ENCODE measurements at regions of chr1 and their contacts with region 1.

Region 1: DNA sequence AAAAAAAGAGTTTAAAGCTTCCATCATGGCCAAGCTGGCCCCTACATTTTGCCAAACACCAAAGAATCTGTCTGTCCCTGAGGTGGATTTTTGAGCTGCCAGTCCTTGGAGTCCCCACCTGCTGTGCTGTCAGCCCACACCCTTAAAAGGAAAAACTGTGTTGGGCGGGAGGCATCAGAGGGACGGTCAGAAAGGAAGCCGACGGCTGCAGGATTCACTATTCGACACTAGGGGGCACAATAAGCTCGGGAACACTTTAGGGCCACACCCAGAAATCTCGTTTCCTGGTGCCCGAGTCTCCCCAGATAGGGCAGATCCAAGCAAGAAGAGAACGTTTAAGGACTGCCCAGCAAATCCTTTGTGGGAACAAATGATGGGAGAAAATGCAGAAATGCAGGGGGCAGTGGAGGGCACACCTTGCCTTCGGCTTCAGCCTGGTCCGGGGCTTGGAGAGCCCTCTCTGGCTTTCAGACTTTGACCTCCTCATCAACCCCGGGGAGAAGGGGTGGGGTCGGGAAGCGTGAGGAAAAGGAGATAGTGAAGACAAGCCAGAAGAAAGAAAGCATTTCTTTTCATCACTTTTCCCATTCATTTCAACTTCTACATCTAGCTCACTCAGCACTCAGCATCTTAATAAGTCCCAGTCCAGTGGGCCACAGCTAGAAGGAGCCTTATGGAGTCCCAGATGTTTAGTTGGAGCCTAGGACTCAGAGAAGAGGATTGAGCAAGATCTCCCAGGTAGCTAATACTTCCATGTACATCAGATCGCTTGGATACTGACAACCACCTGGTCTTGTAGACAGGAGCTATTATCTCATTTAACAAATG is 5.0 kb upstream of the CTTNBP2NL start:
- DNase-seq: peak; percentile 39
- H3K4me3 ChIP-seq: peak overlapping the region; percentile 28
- H3K27me3 ChIP-seq: no peaks in the 10 kb centered on the region
- CTCF ChIP-seq: peak; percentile 92

Region 2: DNA sequence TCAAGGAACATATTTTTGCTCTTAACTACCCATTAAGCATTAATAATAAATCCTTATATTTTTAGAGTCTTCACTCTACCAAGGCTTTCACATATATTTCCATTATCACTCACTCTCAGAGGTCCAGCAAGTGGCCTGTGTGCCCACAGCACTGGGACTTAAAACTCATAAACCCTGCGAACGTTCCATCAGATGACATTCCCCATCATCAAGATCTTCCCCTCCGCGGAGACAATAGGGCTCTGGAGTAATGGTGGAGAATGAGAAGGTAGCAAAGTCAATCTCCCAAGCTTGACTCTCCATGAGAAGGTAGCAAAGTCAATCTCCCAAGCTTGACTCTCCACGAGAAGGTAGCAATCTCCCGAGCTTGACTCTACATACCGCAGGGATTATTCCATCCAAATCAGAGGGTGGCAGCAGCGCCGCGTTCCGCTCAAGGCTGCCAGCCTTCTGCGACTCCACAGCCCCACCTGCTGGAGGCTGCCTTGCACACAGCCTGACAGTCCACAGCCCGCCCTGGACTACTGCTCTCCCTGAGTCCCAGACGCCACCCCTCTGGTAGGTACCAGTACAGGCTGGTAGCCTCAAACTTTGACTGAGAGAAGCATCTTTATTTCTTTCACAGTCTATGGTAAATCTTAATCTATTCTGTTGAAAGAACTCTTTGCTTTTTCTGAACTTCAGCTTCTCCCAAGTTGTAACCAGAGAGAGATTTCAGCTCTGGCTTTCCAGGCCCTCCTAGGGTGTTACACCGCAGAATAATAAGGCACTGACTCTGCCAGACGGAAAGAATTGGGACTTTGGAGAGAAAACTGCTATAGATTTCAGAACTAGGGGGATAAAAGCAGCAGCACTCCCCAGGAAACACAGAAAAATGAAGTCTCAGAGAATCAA is 21.4 kb before region 1 on chr1:
- CTCF ChIA-PET with region 1: interaction called, 30 read pairs
- POLR2A ChIA-PET with region 1: no interaction called
- DNase-seq: no peak
- H3K4me3 ChIP-seq: no peak overlapping the region
- H3K27me3 ChIP-seq: peaks cover 12% of the 10 kb centered on the region
- CTCF ChIP-seq: peak; percentile 99

Region 3: GRCh38 chr1:112466078-112466660 is 75.2 kb after region 1 on chr1:
- CTCF ChIA-PET with region 1: interaction called, 119 read pairs
- POLR2A ChIA-PET with region 1: no interaction called
- DNase-seq: peak; percentile 64
- H3K4me3 ChIP-seq: peak overlapping the region; percentile 18
- H3K27me3 ChIP-seq: no peaks in the 10 kb centered on the region
- CTCF ChIP-seq: peak; percentile 85

Region 4: DNA sequence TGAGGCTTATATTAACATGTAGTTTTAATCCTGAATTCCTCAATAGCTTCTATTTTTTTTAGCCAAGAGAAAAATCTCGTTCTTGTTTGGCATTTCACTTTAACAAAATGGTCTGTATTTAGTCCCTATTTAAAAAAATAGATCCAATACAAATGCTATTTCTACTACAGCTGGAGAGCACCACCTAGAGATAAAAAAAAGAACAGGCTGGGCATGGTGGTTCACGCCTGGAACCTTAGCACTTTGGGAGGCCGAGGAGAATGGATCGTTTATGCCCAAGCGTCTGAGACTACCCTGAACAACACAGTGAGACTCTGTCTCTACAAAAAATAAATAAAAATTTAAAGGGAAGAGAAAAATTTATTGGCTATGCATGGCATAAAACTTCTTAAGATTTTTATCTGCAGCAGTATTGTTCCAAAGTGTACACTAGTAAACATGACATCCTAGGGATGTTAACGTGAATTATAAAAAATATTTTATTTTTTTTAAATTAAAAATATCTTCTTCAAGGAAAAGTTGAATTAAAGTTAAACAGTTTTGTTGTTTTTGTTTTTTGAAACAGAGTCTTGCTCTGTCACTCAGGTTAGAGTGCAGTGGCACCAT is 223.6 kb after region 1 on chr1:
- CTCF ChIA-PET with region 1: interaction called, 29 read pairs
- POLR2A ChIA-PET with region 1: interaction called, 9 read pairs
- DNase-seq: no peak
- H3K4me3 ChIP-seq: no peak overlapping the region
- H3K27me3 ChIP-seq: no peaks in the 10 kb centered on the region
- CTCF ChIP-seq: peak; percentile 73

Region 5: DNA sequence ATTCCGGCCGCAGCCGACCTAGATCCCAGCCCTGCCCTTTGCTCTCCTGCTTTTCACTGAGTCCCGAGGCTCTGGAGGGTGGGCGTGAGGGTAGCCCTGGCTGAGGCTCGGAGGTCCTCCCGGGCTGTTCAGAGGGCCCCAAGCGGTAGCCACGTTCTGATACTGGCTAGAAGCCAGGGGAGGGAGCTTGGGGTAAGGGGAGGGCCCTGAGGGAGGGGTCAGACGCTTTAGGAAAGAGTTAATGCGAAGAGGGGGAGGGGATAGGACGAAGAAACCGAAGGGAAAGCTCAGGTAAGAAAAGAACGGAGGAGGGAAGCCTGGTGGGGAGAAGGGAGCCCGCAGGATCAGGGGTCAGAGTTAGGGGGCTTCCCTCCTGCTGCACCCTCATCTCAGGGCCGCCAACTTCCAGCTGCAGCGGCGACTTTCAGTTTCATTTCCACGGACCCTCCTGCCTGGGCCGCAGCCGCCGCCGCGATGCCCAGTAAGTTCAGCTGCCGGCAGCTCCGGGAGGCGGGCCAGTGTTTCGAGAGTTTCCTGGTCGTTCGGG is 283.5 kb after region 1 on chr1 and contains the start of gene MOV10:
- CTCF ChIA-PET with region 1: interaction called, 17 read pairs
- POLR2A ChIA-PET with region 1: no interaction called
- DNase-seq: no peak
- H3K4me3 ChIP-seq: peak within 1 kb of the TSS; percentile 54
- H3K27me3 ChIP-seq: no peaks in the 10 kb centered on the region
- CTCF ChIP-seq: no peak
- polyA plus RNA-seq, gene MOV10: 48.9 and 93.7 TPM in 2 replicates

Region 6: GRCh38 chr1:112715264-112716053 is 324.5 kb after region 1 on chr1 and contains the start of gene PPM1J:
- CTCF ChIA-PET with region 1: interaction called, 13 read pairs
- POLR2A ChIA-PET with region 1: no interaction called
- DNase-seq: no peak
- H3K4me3 ChIP-seq: peak within 1 kb of the TSS; percentile 61
- H3K27me3 ChIP-seq: no peaks in the 10 kb centered on the region; the same call in 1 of the 2 replicates
- CTCF ChIP-seq: no peak
- polyA plus RNA-seq, gene PPM1J: 0.67 and 1.4 TPM in 2 replicates

Measured in BJ (cell line).